ENCODE measurements at regions of chr18 and their contacts with region 1.

Region 1: DNA sequence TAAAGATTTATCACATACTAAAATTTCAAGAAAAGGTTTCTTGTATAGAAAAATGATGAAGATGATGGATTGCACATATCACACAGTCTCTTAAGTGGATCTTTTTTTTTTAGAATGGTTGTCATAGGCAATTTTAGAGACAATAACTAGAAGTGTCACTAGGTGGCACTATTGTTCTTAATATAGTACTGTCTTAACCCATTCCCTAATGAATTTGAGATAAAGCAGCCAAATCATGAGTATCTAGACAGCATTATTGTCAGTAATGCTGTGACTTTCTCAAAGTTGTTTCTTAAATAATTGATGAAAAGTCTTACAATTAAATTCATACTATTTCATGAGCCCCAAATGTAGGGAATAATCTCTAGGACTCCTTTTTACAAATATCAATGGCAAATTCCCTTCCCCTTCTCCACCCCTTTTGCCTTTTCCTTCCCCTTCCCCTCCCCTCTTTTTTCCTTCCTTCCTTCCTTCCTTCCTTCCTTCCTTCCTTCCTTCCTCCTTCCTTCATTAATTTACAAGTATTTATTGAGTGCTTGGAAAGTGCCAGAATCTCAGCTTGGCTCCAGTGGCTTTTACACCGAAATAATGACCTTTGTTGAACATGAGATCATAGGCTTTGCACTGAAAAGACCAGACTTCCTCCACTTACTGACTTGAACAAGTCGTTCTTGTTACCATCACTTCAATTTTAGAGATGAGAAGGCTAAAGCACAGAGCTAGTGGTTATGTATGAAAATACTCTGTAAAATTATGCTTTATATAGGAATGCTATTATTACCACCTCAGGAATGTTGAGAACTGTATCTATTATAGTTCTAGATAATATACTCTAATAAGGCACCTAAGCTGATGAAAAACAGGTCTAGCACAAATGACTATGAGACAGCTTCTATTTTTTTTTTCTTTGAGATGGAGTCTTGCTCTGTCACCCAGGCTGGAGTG is 19.8 kb downstream of the MYL12B start:
- DNase-seq: peak in 1 of 2 experiments; percentile 81
- H3K4me3 ChIP-seq: no peak overlapping the region
- H3K4me1 ChIP-seq: peaks cover 15% of the 10 kb centered on the region
- H3K27me3 ChIP-seq: no peaks in the 10 kb centered on the region

Region 2: DNA sequence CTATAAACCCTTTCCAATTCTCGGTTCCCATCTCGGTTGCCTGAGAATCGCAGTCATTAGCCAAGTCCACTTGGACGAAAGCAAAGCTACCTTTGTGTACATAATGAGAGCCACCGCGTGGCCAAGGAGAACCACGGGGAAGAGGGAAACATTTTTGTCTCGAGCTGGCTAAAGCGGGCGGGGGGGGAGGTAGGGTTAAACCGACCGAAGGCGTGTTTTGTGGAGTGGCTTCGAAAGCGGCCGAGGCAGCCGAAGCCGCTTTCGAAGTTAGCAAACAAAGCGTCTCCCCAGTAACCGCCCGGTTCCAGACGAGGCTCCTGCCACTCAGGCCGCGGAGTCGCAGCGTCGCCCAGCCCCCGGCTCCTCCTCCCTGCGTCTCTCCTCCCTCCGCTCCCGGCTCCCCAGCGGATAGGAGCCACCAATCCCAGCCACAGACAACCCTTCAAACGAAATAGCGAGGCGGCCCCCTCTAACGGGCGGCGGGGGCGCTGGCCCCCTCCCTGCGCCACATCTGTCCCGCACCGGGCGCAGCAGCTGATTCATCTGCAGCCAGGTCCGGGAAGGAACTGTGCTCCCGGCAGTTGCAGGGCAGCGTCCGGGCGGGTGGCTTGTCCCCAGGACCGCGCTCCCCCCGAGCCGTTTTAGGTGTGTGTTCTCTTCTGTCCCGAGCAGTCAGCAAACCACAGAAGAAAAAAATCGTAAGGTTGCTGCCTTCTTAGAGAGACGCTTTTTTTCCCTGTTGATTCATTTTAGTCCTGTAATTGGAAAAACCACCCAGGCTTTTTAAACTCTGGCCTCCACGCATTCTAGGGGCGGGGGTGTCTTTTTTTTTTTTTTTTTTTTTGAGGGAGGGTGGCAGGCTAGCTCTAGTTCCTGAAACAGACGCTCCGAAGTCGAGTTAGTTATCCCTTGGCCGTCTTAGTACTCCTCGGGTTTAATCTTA is 166.4 kb after region 1 on chr18:
- in situ Hi-C with region 1: loop called (anchors 10 kb)
- DNase-seq: peak; percentile 96 to 97
- H3K4me3 ChIP-seq: peak overlapping the region; percentile 58
- H3K4me1 ChIP-seq: peaks cover 13% of the 10 kb centered on the region
- H3K27me3 ChIP-seq: no peaks in the 10 kb centered on the region

Region 3: DNA sequence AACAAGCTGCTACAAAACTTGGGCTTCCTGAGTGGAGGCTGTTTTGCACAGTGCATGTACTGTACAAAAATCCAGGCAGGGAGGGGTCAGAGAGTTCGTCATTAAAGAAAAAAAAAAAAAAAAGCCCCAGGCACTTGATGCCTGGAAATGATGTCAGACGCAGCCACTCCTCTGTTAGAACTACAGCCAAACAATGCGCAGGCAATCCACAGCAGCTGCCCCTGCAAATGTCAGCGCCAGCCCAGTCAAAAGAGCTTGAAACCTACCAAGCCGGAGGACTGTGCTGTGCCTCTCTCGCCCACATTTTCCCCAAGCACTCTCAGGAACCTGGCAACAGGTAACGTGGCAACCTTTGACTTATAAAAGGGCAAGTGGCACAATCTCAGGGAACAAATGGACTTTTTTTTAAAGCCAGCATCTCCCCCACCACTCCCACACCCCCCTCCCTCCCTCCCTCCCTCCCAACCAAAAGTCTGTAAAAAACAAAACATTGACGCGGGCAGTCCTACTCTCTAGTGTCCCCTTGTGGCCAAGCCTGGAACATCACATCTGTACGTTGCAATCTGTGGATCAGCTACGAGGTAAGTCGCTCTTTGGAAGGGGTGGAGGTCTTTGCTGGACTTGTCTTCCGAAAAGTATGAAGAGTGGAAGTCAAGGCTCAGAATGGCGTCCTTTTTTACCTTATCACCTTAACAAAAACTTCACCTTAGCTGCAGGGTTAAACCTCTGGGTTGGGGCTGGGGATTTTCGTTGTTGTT is 312.4 kb after region 1 on chr18:
- in situ Hi-C with region 1: loop called (anchors 5 kb)
- DNase-seq: peak; percentile 90 to 93
- H3K4me3 ChIP-seq: peak overlapping the region; percentile 25
- H3K4me1 ChIP-seq: peaks cover 34% of the 10 kb centered on the region
- H3K27me3 ChIP-seq: no peaks in the 10 kb centered on the region

Region 4: GRCh38 chr18:3665780-3666525 is 384.2 kb after region 1 on chr18:
- in situ Hi-C with region 1: loop called (anchors 5 kb)
- DNase-seq: peak; percentile 81 to 86
- H3K4me3 ChIP-seq: no peak overlapping the region
- H3K4me1 ChIP-seq: peaks cover 10% of the 10 kb centered on the region
- H3K27me3 ChIP-seq: no peaks in the 10 kb centered on the region

Region 5: DNA sequence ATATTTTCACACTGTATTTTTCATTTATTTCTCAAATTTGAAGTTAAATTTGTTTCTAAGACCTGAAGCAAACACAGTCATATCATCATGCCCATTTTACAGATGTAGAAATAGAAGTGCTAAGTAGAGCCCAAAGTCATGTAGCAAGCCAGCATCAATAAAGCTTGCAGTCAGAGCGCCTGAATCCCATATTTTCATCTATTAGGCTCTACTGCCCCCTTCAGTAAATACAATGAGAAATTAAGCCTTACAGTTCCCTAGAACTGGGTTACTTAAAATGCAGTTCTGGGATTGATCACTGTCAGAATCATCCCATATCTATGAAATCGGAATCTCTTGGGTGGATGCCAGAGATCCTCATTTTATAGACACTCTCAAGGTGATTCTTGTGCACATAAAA is 588.1 kb after region 1 on chr18:
- in situ Hi-C with region 1: loop called (anchors 10 kb)
- DNase-seq: peak in 1 of 2 experiments; percentile 25
- H3K4me3 ChIP-seq: no peak overlapping the region
- H3K4me1 ChIP-seq: no peaks in the 10 kb centered on the region
- H3K27me3 ChIP-seq: no peaks in the 10 kb centered on the region